ENCODE measurements at regions of chr6 and their contacts with region 1.

Region 1: GRCh38 chr6:158762787-158763433 is 56.3 kb downstream of the EZR start:
- DNase-seq: peak; percentile 56 to 85 (median 72)
- ATAC-seq: peak; percentile 67
- H3K4me3 ChIP-seq: no peak overlapping the region
- H3K27ac ChIP-seq: no peak overlapping the region
- H3K4me1 ChIP-seq: peaks cover 23 to 38% of the 10 kb centered on the region in 2 experiments; a peak in 4 of 5 replicates
- H3K27me3 ChIP-seq: 0 out of 5 replicates have a peak, but pooled peaks cover 0 to 4% of the 10 kb centered on the region in 2 experiments
- CTCF ChIP-seq: no peak
- EP300 ChIP-seq: peak; percentile 89
- POLR2A ChIP-seq: no peak
- RAD21 ChIP-seq: 0 out of 4 replicates have a peak, but pooled peaks of 1 of the 2 experiments have one; percentile 23

Region 2: DNA sequence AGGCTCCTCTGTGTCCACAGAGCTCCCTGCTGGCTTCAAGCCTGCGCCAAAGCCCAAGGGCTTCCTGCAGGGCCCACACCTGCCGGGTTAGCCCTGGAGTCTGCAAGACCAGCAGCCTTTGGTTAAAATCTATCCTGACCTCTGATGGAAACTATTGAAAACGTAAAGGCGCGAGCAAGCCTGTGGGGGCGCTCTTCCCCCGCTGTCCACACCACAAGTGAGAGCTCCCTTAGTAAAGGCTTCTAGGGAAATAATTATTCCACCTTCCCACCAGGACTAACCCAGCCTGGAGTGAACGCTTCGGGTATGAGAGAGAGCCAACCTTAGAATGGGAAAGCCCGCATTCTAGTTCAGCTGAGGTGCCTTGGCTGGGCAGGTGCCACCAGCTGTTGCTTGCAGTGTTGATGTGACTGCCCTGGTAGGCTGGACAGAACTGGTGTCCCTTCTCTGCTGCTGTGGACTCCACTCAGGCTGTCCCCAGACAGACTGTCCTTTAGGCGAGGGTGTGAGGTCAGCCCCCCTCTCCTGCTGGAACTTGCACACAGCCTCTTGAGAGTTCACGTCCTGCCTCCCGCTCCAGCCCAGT is 44.4 kb before region 1 on chr6:
- CTCF ChIA-PET with region 1: no interaction called
- POLR2A ChIA-PET with region 1: no interaction called
- in situ Hi-C with region 1: no loop called
- intact Hi-C with region 1: loop called (anchors 2 kb)
- DNase-seq: peak; percentile 66 to 77 (median 67)
- ATAC-seq: peak; percentile 90
- H3K4me3 ChIP-seq: no peak overlapping the region
- H3K27ac ChIP-seq: no peak overlapping the region
- H3K4me1 ChIP-seq: peaks cover 6 to 13% of the 10 kb centered on the region in 2 experiments; a peak in 4 of 5 replicates
- H3K27me3 ChIP-seq: peaks cover 3 to 16% of the 10 kb centered on the region in 2 experiments; a peak in 3 of 5 replicates
- CTCF ChIP-seq: peak; percentile 91 to 98 (median 97)
- EP300 ChIP-seq: no peak
- POLR2A ChIP-seq: no peak
- RAD21 ChIP-seq: peak; percentile 67 to 88

Region 3: GRCh38 chr6:158743033-158743651 is 19.8 kb before region 1 on chr6:
- CTCF ChIA-PET with region 1: no interaction called
- POLR2A ChIA-PET with region 1: interaction called, 11 read pairs
- in situ Hi-C with region 1: no loop called
- intact Hi-C with region 1: no loop called
- DNase-seq: no peak
- ATAC-seq: peak; percentile 74
- H3K4me3 ChIP-seq: no peak overlapping the region
- H3K27ac ChIP-seq: no peak overlapping the region
- H3K4me1 ChIP-seq: no peaks in the 10 kb centered on the region; a peak in 3 of 5 replicates
- H3K27me3 ChIP-seq: peaks cover 0 to 9% of the 10 kb centered on the region in 2 experiments; a peak in 2 of 5 replicates
- CTCF ChIP-seq: no peak
- EP300 ChIP-seq: no peak
- POLR2A ChIP-seq: no peak
- RAD21 ChIP-seq: no peak

Region 4: DNA sequence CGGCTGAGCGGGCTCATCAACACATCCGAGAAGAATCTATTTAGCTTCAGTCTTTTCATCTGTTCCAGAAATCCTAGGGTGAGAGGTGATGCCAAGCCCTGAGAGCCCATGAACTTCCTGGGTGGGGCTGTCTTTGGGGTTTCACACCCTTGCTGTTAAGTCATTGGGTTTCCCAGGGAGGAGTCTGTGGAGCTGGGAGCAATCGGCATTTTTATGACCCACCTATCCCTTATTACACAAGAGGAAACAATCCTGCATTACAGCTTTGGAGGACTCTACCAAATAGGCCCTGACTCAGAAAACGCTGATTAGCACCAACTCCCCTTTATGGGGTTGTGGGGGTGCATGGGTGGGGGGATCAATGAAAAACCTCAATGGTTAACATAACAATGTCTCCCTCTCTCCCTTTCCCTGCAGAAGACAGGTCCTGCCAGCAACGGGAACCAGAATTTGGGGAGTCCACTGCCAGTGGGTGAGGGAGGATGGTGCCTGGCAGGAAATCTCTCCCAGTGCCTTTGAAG is 10.0 kb after region 1 on chr6:
- CTCF ChIA-PET with region 1: no interaction called
- POLR2A ChIA-PET with region 1: interaction called, 16 read pairs
- in situ Hi-C with region 1: no loop called
- intact Hi-C with region 1: no loop called
- DNase-seq: no peak
- ATAC-seq: no peak
- H3K4me3 ChIP-seq: no peak overlapping the region
- H3K27ac ChIP-seq: no peak overlapping the region
- H3K4me1 ChIP-seq: no peaks in the 10 kb centered on the region
- H3K27me3 ChIP-seq: no peaks in the 10 kb centered on the region
- CTCF ChIP-seq: no peak
- EP300 ChIP-seq: no peak
- POLR2A ChIP-seq: no peak
- RAD21 ChIP-seq: no peak

Measured in K562 (cell line).